Heart left ventricle (tissue), 16 donors: ENCODE measurements at regions of chr14 and their contacts with region 1.

Region 1: DNA sequence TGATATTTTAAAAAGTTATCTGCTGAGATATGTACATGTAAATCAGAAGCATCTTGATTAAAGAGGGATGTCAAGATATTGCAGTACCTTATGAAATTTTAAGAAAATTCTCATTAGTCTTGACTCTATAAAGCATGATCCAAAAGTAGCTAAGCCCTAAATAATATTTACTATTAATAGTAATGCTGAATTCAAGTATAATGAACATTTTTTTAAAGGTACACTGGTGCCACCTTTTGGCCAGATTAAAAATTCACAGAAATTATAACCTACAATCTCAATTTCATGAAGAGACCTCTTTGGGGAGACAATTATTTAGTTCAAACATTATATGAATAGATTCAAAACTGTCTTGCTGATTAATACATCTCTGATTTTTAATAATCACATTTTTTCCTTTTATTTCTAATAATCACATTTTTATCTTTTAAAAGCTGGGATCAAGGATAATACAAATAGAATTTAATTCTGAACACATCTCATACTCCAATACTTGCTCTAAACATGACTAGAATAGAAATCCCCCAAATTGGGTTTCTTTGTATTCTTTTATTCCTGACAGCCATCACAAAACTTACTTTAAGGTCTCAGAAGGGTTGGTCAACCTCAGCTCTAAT is 13.4 kb downstream of the AKAP5 start:
- DNase-seq: no peak
- ATAC-seq: no peak
- H3K4me3 ChIP-seq: no peak overlapping the region
- H3K27ac ChIP-seq: no peak overlapping the region
- H3K4me1 ChIP-seq: peaks cover 0 to 4% (median 0%) of the 10 kb centered on the region in 12 donors
- H3K27me3 ChIP-seq: no peaks in the 10 kb centered on the region
- CTCF ChIP-seq: peak in 10 of 12 donors; percentile 15 to 64 (median 48)
- POLR2A ChIP-seq: no peak

Region 2: GRCh38 chr14:64349741-64350490 is 128.8 kb before region 1 on chr14:
- intact Hi-C with region 1: loop called in 6 of 10 experiments (anchors 2 to 10 kb)
- DNase-seq: no peak
- ATAC-seq: no peak
- H3K4me3 ChIP-seq: no peak overlapping the region
- H3K27ac ChIP-seq: no peak overlapping the region
- H3K4me1 ChIP-seq: no peaks in the 10 kb centered on the region
- H3K27me3 ChIP-seq: no peaks in the 10 kb centered on the region
- CTCF ChIP-seq: no peak
- POLR2A ChIP-seq: no peak

Region 3: GRCh38 chr14:64421166-64421565 is 57.6 kb before region 1 on chr14:
- intact Hi-C with region 1: loop called in 1 of 10 experiments (anchors 5 kb)
- DNase-seq: no peak
- ATAC-seq: no peak
- H3K4me3 ChIP-seq: no peak overlapping the region
- H3K27ac ChIP-seq: no peak overlapping the region
- H3K4me1 ChIP-seq: peaks cover 0 to 5% (median 0%) of the 10 kb centered on the region in 12 donors
- H3K27me3 ChIP-seq: no peaks in the 10 kb centered on the region
- CTCF ChIP-seq: no peak
- POLR2A ChIP-seq: no peak